Natural killer cell (primary cell): ENCODE measurements at regions of chr12 and their contacts with region 1.

Region 1: DNA sequence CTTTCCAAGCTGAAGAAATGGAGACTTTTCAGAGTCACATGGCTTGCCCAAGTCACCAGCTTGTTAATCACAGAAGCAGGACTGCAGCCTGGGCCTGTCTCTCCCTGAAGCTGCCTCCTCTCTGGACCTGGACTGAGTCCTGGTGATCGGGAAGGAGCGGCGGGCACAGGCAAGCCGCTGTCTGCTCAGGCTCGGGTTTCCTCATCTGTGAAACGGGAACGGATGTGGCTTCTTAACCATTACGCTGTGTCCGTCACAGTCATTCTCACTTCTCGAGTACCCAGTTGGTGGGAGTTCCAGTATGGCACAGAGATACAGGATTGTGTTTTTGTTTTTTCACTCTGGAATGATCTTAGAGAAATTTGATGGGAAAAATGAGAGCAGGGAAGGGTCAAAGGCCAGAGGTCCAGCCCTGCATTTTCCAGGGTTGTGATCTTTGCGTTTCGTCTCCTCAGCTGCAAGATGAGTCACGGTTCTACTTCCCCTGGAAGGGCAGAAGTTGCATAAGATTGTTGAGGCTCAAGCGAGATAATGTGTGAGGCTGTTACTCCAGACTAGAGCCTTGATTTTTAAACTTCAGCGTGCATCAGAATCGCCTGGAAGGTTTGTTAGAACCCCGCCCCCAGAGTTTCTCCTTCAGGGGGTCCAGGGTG is 7.6 kb upstream of the LRTM2 start:
- DNase-seq: peak in 1 of 2 donors; percentile 34
- ATAC-seq: peak; percentile 53 to 72 (median 58)
- H3K4me3 ChIP-seq: no peak overlapping the region
- H3K4me3 Mint-ChIP-seq: peak overlapping the region; percentile 50
- H3K27ac ChIP-seq: peak overlapping the region; percentile 53
- H3K27ac Mint-ChIP-seq: peak overlapping the region; percentile 34 to 89
- H3K4me1 ChIP-seq: peaks cover 66% of the 10 kb centered on the region
- H3K4me1 Mint-ChIP-seq: peaks cover 17 to 38% of the 10 kb centered on the region in 2 donors
- H3K27me3 ChIP-seq: no peaks in the 10 kb centered on the region
- H3K27me3 Mint-ChIP-seq: peaks cover 0 to 4% of the 10 kb centered on the region in 2 donors
- CTCF ChIP-seq: no peak

Region 2: GRCh38 chr12:1920971-1921370 is 108.2 kb after region 1 on chr12:
- intact Hi-C with region 1: loop called (anchors 5 kb)
- DNase-seq: no peak
- ATAC-seq: peak; percentile 36 to 61 (median 53)
- H3K4me3 ChIP-seq: peak overlapping the region; percentile 48
- H3K4me3 Mint-ChIP-seq: no peak overlapping the region
- H3K27ac ChIP-seq: peak overlapping the region; percentile 11
- H3K27ac Mint-ChIP-seq: peak overlapping the region in 1 of 2 donors; percentile 74
- H3K4me1 ChIP-seq: peaks cover 30% of the 10 kb centered on the region
- H3K4me1 Mint-ChIP-seq: peaks cover 6 to 27% of the 10 kb centered on the region in 2 donors
- H3K27me3 ChIP-seq: no peaks in the 10 kb centered on the region
- H3K27me3 Mint-ChIP-seq: peaks cover 7 to 15% of the 10 kb centered on the region in 2 donors
- CTCF ChIP-seq: no peak